Activated B cell treated with CpG ODN at 0.5 μM for 24 hours (primary cell): ENCODE measurements at regions of chr22 and their contacts with region 1.

Region 1: DNA sequence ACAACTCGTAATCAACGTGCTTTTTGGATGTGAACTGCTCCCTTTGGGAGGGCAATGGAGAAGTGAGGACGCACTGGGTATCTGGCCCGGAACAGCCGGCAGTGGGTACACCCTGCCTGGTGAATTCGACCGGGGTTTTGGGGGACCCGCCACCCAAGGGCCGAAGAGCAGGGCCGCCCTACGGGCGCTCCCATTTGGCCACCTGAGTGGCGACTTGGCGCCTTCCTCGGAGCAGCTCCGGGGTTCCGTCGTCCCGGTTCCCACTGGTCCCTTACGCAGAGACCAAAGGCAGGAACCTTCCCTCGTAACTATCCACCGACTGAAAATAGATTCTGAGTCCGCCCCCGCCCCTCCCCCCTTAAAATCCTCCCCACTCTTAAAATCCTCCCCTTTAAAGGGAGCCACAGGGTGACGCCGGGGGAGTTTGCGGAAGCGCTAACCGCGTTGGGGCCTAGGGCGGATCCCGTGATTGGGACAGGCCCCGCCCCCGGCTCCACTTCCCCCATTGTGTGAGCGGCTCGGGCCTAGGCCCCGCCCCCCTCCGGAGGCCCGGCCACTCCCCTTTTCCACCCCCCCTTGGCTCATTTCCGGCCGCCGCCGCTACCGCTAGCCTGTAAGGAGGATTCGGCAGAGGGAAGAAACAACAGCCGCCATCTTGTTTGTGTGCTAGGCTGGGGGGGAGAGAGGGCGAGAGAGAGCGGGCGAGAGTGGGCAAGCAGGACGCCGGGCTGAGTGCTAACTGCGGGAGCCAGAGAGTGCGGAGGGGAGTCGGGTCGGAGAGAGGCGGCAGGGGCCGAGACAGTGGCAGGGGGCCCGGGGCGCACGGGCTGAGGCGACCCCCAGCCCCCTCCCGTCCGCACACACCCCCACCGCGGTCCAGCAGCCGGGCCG is 1.0 kb upstream of the EP300 start:
- DNase-seq: peak; percentile 99
- ATAC-seq: peak; percentile 83
- H3K4me3 Mint-ChIP-seq: peak overlapping the region; percentile 98
- H3K27ac Mint-ChIP-seq: peak overlapping the region; percentile 99
- H3K4me1 Mint-ChIP-seq: peaks cover 33% of the 10 kb centered on the region
- H3K27me3 Mint-ChIP-seq: no peaks in the 10 kb centered on the region
- CTCF ChIP-seq: no peak

Region 2: GRCh38 chr22:40922484-40923303 is 168.7 kb before region 1 on chr22:
- CTCF ChIA-PET with region 1: interaction called, 25 read pairs
- POLR2A ChIA-PET with region 1: interaction called, 53 read pairs
- intact Hi-C with region 1: loop called (anchors 1 kb)
- DNase-seq: no peak
- ATAC-seq: peak; percentile 86
- H3K4me3 Mint-ChIP-seq: peak overlapping the region; percentile 15
- H3K27ac Mint-ChIP-seq: peak overlapping the region; percentile 6
- H3K4me1 Mint-ChIP-seq: peaks cover 4% of the 10 kb centered on the region
- H3K27me3 Mint-ChIP-seq: no peaks in the 10 kb centered on the region
- CTCF ChIP-seq: no peak

Region 3: GRCh38 chr22:41001722-41002122 is 89.7 kb before region 1 on chr22:
- CTCF ChIA-PET with region 1: no interaction called
- POLR2A ChIA-PET with region 1: interaction called, 13 read pairs
- intact Hi-C with region 1: no loop called
- DNase-seq: no peak
- ATAC-seq: no peak
- H3K4me3 Mint-ChIP-seq: no peak overlapping the region
- H3K27ac Mint-ChIP-seq: no peak overlapping the region
- H3K4me1 Mint-ChIP-seq: no peaks in the 10 kb centered on the region
- H3K27me3 Mint-ChIP-seq: no peaks in the 10 kb centered on the region
- CTCF ChIP-seq: no peak

Region 4: DNA sequence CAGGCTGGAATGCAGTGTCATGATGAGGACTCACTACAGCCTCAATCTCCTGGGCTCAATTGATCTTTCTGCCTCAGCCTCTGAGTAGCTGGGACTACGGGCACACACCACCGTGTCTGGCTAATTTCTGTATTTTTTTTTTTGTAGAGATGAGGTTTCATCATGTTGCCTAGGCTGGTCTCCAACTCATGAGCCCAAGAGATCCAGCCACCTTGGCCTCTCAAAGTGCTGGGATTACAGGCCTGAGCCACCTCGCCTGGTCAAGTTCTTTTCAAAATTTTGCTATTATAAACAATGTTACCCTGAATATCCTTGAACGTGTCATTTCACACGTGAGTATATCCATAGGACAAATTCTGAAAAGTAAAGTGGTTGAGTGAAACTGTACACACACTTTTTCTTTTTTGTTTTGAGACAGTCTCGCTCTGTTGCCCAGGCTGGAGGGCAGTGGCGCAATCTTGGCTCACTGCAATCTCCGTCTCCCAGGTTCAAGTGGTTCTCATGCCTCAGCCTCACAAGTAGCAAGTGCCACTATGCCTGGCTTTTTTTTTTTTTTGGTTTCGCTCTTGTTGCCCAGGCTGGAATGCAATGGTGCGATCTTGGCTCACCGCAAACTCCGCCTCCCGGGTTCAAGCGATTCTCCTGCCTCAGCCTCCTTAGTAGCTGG is 20.6 kb before region 1 on chr22:
- CTCF ChIA-PET with region 1: interaction called, 6 read pairs
- POLR2A ChIA-PET with region 1: interaction called, 125 read pairs
- intact Hi-C with region 1: loop called (anchors 1 kb)
- DNase-seq: no peak
- ATAC-seq: no peak
- H3K4me3 Mint-ChIP-seq: no peak overlapping the region
- H3K27ac Mint-ChIP-seq: no peak overlapping the region
- H3K4me1 Mint-ChIP-seq: peaks cover 33% of the 10 kb centered on the region
- H3K27me3 Mint-ChIP-seq: no peaks in the 10 kb centered on the region
- CTCF ChIP-seq: no peak

Region 5: GRCh38 chr22:41106122-41106968 is 15.0 kb after region 1 on chr22:
- CTCF ChIA-PET with region 1: no interaction called
- POLR2A ChIA-PET with region 1: interaction called, 9 read pairs
- intact Hi-C with region 1: loop called (anchors 2 kb)
- DNase-seq: no peak
- ATAC-seq: no peak
- H3K4me3 Mint-ChIP-seq: no peak overlapping the region
- H3K27ac Mint-ChIP-seq: peak overlapping the region; percentile 8
- H3K4me1 Mint-ChIP-seq: peaks cover 51% of the 10 kb centered on the region
- H3K27me3 Mint-ChIP-seq: no peaks in the 10 kb centered on the region
- CTCF ChIP-seq: no peak

Region 6: DNA sequence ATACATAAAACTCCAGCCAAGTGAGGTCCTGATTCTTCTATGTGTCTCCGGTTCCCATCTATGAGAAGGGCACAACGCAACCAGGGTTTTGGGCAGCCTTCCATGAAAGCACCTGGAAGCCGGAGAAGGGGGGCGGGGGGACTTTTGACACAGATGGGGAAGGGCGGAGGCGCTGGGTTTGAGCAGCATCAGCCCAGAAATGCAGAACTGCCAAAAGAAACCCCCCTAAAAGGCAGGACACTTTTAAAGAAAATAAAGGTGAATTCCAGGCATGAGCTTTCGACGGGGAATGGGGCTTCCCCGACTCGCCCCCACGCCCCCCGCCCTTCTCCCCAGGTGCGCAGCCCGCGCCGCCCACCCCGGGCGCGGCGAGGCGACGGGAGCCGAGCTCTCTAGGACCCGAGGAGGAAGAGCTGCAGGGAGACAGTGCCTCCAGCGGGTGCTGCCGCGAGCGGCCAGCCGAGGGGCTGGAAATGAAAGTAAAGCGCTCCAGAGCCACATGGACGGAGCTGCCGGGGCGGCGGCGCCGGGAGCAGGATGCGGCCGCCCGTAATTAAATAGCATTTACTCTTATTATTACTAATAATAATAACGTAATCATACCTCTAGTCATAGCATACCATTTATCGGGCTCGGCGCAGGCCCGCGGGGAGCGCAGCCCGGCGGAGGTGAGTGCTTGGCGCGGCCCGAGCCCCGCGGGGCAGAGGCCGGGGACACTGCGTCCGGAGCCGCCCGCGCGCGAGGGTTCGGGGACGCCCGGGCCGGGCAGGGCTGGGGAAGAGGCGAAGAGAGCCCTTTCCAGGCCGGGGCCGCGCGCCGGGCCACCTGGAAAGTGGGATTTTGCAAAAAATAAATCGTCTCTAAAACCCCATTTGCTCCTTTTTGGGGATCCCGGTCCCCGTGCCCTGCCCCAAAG is 210.0 kb after region 1 on chr22 and contains the start of gene ZC3H7B:
- CTCF ChIA-PET with region 1: no interaction called
- POLR2A ChIA-PET with region 1: interaction called, 5 read pairs
- intact Hi-C with region 1: loop called (anchors 5 kb)
- DNase-seq: peak; percentile 74
- ATAC-seq: peak; percentile 93
- H3K4me3 Mint-ChIP-seq: peak within 1 kb of the TSS; percentile 83
- H3K27ac Mint-ChIP-seq: peak within 1 kb of the TSS; percentile 92
- H3K4me1 Mint-ChIP-seq: peaks cover 30% of the 10 kb centered on the region
- H3K27me3 Mint-ChIP-seq: no peaks in the 10 kb centered on the region
- CTCF ChIP-seq: no peak
- total RNA-seq, gene ZC3H7B: 54.0 and 58.2 TPM in 2 replicates